B cell (primary cell): ENCODE measurements at regions of chr11 and their contacts with region 1.

Region 1: DNA sequence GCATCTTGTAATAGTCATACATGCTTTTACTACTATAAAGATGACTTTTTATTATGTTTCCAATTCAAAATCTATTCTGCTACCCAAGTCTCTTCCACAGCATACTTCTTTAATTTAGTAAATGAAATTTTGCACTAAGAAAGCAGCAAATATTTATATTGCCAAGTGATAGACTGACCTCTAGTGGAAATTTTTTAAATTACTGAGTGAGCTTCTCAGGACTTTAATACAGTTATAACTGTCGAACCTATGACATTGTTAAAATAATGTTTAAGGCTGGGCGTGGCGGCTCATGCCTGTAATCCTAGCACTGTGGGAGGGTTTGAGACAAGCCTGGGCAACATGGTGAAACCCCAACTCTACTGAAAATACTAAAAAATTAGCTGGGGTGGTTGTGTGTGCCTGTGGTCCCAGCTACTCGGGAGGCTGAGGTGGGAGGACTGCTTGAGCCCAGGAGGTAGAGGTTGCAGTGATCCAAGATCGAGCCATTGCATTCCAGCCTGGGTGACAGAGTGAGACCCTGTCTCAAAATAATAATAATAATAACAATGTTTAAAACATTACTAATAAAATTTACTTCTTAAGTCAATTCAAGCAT is 27.3 kb downstream of the STK33 start:
- DNase-seq: peak; percentile 72
- ATAC-seq: peak; percentile 43
- H3K4me3 ChIP-seq: no peak overlapping the region
- H3K4me3 Mint-ChIP-seq: no peak overlapping the region
- H3K27ac ChIP-seq: no peak overlapping the region
- H3K27ac Mint-ChIP-seq: no peak overlapping the region
- H3K4me1 ChIP-seq: no peaks in the 10 kb centered on the region
- H3K4me1 Mint-ChIP-seq: no peaks in the 10 kb centered on the region
- H3K27me3 ChIP-seq: no peaks in the 10 kb centered on the region
- H3K27me3 Mint-ChIP-seq: no peaks in the 10 kb centered on the region
- CTCF ChIP-seq: peak; percentile 93

Region 2: DNA sequence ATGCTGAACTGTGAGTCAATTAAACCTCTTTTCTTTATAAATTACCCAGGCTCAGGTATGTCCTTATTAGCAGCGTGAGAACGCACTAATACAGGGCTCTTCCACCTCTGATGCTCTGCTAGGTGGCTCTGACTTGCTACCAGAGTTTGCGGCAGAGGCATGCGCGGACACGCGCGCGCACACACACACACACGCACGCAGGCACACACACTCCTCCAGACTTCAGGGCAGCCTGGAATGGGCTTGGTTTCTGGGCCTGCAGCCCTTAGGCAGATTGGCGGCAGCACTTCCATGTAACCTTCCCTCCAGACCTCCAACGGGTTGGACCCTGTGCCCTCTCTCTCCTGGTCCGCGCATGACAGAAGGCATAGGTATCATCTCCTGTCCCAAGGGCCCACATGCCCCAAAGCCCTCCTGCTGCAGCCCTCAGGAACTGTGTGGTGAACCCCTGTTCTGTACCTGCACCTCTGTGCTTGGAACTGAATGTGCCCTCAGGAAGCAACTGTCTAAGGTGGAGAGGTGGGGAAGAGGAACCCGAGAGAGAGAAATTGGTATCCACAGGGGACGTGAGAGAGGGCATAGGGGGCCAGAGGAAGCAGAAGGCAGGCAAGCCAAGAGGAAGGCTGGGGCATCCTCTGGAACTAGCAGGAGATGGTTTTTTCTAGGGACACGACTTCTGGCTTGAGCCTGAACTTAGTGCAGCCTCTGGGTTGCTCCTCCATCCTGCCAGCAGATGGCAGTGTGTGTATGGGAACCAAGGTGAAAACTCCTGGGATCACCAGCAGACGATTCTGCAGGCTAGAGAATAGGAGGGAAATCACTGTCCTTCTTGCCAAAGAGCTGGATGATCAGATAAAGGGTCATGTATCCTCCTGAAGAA is 374.5 kb before region 1 on chr11:
- CTCF ChIA-PET with region 1: interaction called, 88 read pairs
- POLR2A ChIA-PET with region 1: no interaction called
- intact Hi-C with region 1: loop called (anchors 1 kb)
- DNase-seq: peak; percentile 78
- ATAC-seq: peak; percentile 81
- H3K4me3 ChIP-seq: no peak overlapping the region
- H3K4me3 Mint-ChIP-seq: no peak overlapping the region
- H3K27ac ChIP-seq: no peak overlapping the region
- H3K27ac Mint-ChIP-seq: no peak overlapping the region
- H3K4me1 ChIP-seq: peaks cover 12 to 15% of the 10 kb centered on the region in 2 donors
- H3K4me1 Mint-ChIP-seq: peaks cover 13% of the 10 kb centered on the region
- H3K27me3 ChIP-seq: peaks cover 0 to 2% (median 0%) of the 10 kb centered on the region in 4 experiments
- H3K27me3 Mint-ChIP-seq: peaks cover 20% of the 10 kb centered on the region
- CTCF ChIP-seq: peak; percentile 94

Region 3: DNA sequence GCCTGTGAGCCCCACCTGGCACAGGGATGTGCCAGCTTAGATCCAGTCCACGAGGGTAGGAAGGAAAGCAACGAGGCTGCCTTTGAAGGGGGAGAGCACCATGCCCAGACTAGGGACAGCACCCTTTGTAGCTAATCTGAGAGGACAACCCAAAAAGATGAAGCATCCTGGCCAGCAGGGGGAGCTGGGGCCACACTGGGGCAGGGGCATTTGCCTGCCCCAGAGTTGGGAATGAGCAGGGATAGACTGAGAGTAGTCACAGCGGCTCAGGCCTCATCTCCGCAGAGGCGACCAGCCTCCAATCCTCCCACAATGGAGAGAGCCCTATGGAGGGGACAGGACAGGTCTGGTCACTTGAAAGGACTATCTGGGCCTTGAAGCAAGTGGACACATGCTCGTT is 319.4 kb before region 1 on chr11:
- CTCF ChIA-PET with region 1: interaction called, 38 read pairs
- POLR2A ChIA-PET with region 1: no interaction called
- intact Hi-C with region 1: loop called (anchors 1 kb)
- DNase-seq: no peak
- ATAC-seq: no peak
- H3K4me3 ChIP-seq: no peak overlapping the region
- H3K4me3 Mint-ChIP-seq: no peak overlapping the region
- H3K27ac ChIP-seq: no peak overlapping the region
- H3K27ac Mint-ChIP-seq: no peak overlapping the region
- H3K4me1 ChIP-seq: no peaks in the 10 kb centered on the region
- H3K4me1 Mint-ChIP-seq: no peaks in the 10 kb centered on the region
- H3K27me3 ChIP-seq: peaks cover 0 to 7% (median 0%) of the 10 kb centered on the region in 4 experiments
- H3K27me3 Mint-ChIP-seq: peaks cover 30% of the 10 kb centered on the region
- CTCF ChIP-seq: peak; percentile 51

Region 4: GRCh38 chr11:8328848-8329330 is 237.8 kb before region 1 on chr11:
- CTCF ChIA-PET with region 1: interaction called, 4 read pairs
- POLR2A ChIA-PET with region 1: no interaction called
- intact Hi-C with region 1: loop called (anchors 1 kb)
- DNase-seq: peak; percentile 73
- ATAC-seq: peak; percentile 68
- H3K4me3 ChIP-seq: no peak overlapping the region
- H3K4me3 Mint-ChIP-seq: no peak overlapping the region
- H3K27ac ChIP-seq: no peak overlapping the region
- H3K27ac Mint-ChIP-seq: no peak overlapping the region
- H3K4me1 ChIP-seq: peaks cover 28 to 39% of the 10 kb centered on the region in 2 donors
- H3K4me1 Mint-ChIP-seq: peaks cover 23% of the 10 kb centered on the region
- H3K27me3 ChIP-seq: peaks cover 0 to 2% (median 0%) of the 10 kb centered on the region in 4 experiments
- H3K27me3 Mint-ChIP-seq: peaks cover 7% of the 10 kb centered on the region
- CTCF ChIP-seq: peak; percentile 86

Region 5: GRCh38 chr11:8531312-8531711 is 35.4 kb before region 1 on chr11:
- CTCF ChIA-PET with region 1: interaction called, 11 read pairs
- POLR2A ChIA-PET with region 1: no interaction called
- intact Hi-C with region 1: no loop called
- DNase-seq: peak; percentile 6
- ATAC-seq: no peak
- H3K4me3 ChIP-seq: peak overlapping the region in 1 of 5 experiments; percentile 8
- H3K4me3 Mint-ChIP-seq: peak overlapping the region; percentile 64
- H3K27ac ChIP-seq: peak overlapping the region; percentile 30 to 90
- H3K27ac Mint-ChIP-seq: peak overlapping the region; percentile 85
- H3K4me1 ChIP-seq: peaks cover 45 to 46% of the 10 kb centered on the region in 2 donors
- H3K4me1 Mint-ChIP-seq: peaks cover 47% of the 10 kb centered on the region
- H3K27me3 ChIP-seq: no peaks in the 10 kb centered on the region
- H3K27me3 Mint-ChIP-seq: no peaks in the 10 kb centered on the region
- CTCF ChIP-seq: no peak